ENCODE measurements at regions of chr17 and their contacts with region 1.

Region 1: GRCh38 chr17:28335201-28335955 is at the starts of genes IFT20 and TNFAIP1:
- DNase-seq: peak; percentile 100
- H3K4me3 ChIP-seq: peak within 1 kb of the TSS; percentile 86
- H3K4me3 Mint-ChIP-seq: peak within 1 kb of the TSS; percentile 97
- H3K27ac Mint-ChIP-seq: peak within 1 kb of the TSS; percentile 98
- H3K4me1 ChIP-seq: peaks cover 27% of the 10 kb centered on the region
- H3K4me1 Mint-ChIP-seq: peaks cover 33% of the 10 kb centered on the region
- H3K27me3 ChIP-seq: no peaks in the 10 kb centered on the region
- H3K27me3 Mint-ChIP-seq: no peaks in the 10 kb centered on the region
- CTCF ChIP-seq: no peak
- total RNA-seq, gene IFT20: 86.3 and 89.9 TPM in 2 replicates
- total RNA-seq, gene TNFAIP1: 105 and 119 TPM in 2 replicates

Region 2: GRCh38 chr17:28252436-28252835 is 82.9 kb before region 1 on chr17:
- CTCF ChIA-PET with region 1: interaction called, 17 read pairs
- POLR2A ChIA-PET with region 1: interaction called, 4 read pairs
- intact Hi-C with region 1: no loop called
- DNase-seq: no peak
- H3K4me3 ChIP-seq: no peak overlapping the region
- H3K4me3 Mint-ChIP-seq: no peak overlapping the region
- H3K27ac Mint-ChIP-seq: no peak overlapping the region
- H3K4me1 ChIP-seq: no peaks in the 10 kb centered on the region
- H3K4me1 Mint-ChIP-seq: peaks cover 7% of the 10 kb centered on the region
- H3K27me3 ChIP-seq: no peaks in the 10 kb centered on the region
- H3K27me3 Mint-ChIP-seq: peaks cover 3% of the 10 kb centered on the region
- CTCF ChIP-seq: no peak

Region 3: DNA sequence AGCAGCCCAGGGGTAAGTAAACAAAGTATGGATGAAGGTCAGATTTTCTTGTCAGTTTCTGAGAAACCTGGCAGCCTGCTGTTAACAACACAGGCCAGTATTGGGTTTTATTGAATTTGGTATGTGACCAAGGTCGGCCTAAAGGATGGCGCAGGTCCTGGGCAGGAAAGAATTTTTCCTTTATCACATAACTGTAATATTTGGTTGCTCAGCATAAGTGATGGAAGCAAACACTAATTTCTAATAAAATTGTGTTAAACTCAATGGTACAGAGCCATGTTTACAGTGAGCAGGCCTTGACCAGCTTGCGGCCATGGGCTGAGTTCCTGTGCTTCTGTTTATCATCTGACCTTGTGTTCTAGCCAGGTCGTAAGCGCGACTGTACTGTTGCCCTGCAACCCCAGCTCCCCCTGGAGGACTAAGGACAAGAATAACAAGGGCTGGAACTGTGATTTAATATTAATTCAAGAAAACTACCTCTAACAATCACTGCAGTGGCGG is 11.4 kb after region 1 on chr17:
- CTCF ChIA-PET with region 1: interaction called, 13 read pairs
- POLR2A ChIA-PET with region 1: interaction called, 42 read pairs
- intact Hi-C with region 1: no loop called
- DNase-seq: peak; percentile 70 to 72
- H3K4me3 ChIP-seq: no peak overlapping the region
- H3K4me3 Mint-ChIP-seq: no peak overlapping the region
- H3K27ac Mint-ChIP-seq: peak overlapping the region; percentile 1
- H3K4me1 ChIP-seq: peaks cover 22% of the 10 kb centered on the region
- H3K4me1 Mint-ChIP-seq: peaks cover 8% of the 10 kb centered on the region
- H3K27me3 ChIP-seq: no peaks in the 10 kb centered on the region
- H3K27me3 Mint-ChIP-seq: no peaks in the 10 kb centered on the region
- CTCF ChIP-seq: peak; percentile 48 to 66

Region 4: GRCh38 chr17:28364665-28365363 is 29.4 kb after region 1 on chr17 and contains the start of gene SEBOX:
- CTCF ChIA-PET with region 1: interaction called, 38 read pairs
- POLR2A ChIA-PET with region 1: interaction called, 87 read pairs
- intact Hi-C with region 1: loop called (anchors 1 kb)
- DNase-seq: no peak
- H3K4me3 ChIP-seq: no peak within 1 kb of the TSS
- H3K4me3 Mint-ChIP-seq: no peak within 1 kb of the TSS
- H3K27ac Mint-ChIP-seq: no peak within 1 kb of the TSS
- H3K4me1 ChIP-seq: peaks cover 31% of the 10 kb centered on the region
- H3K4me1 Mint-ChIP-seq: peaks cover 27% of the 10 kb centered on the region
- H3K27me3 ChIP-seq: no peaks in the 10 kb centered on the region
- H3K27me3 Mint-ChIP-seq: no peaks in the 10 kb centered on the region
- CTCF ChIP-seq: no peak
- total RNA-seq, gene SEBOX: not detected in 2 replicates

Region 5: GRCh38 chr17:28384281-28385036 is 49.1 kb after region 1 on chr17:
- CTCF ChIA-PET with region 1: interaction called, 11 read pairs
- POLR2A ChIA-PET with region 1: interaction called, 13 read pairs
- intact Hi-C with region 1: no loop called
- DNase-seq: peak; percentile 83 to 86
- H3K4me3 ChIP-seq: peak overlapping the region; percentile 52
- H3K4me3 Mint-ChIP-seq: peak overlapping the region; percentile 89
- H3K27ac Mint-ChIP-seq: peak overlapping the region; percentile 18
- H3K4me1 ChIP-seq: peaks cover 31% of the 10 kb centered on the region
- H3K4me1 Mint-ChIP-seq: peaks cover 17% of the 10 kb centered on the region
- H3K27me3 ChIP-seq: no peaks in the 10 kb centered on the region
- H3K27me3 Mint-ChIP-seq: no peaks in the 10 kb centered on the region
- CTCF ChIP-seq: no peak

Region 6: GRCh38 chr17:28416703-28417311 is 81.4 kb after region 1 on chr17:
- CTCF ChIA-PET with region 1: interaction called, 16 read pairs
- POLR2A ChIA-PET with region 1: no interaction called
- intact Hi-C with region 1: no loop called
- DNase-seq: peak; percentile 87 to 89
- H3K4me3 ChIP-seq: no peak overlapping the region
- H3K4me3 Mint-ChIP-seq: no peak overlapping the region
- H3K27ac Mint-ChIP-seq: peak overlapping the region; percentile 48
- H3K4me1 ChIP-seq: peaks cover 17% of the 10 kb centered on the region
- H3K4me1 Mint-ChIP-seq: peaks cover 17% of the 10 kb centered on the region
- H3K27me3 ChIP-seq: no peaks in the 10 kb centered on the region
- H3K27me3 Mint-ChIP-seq: no peaks in the 10 kb centered on the region
- CTCF ChIP-seq: peak; percentile 92 to 99

Region 7: GRCh38 chr17:28500712-28501379 is 165.5 kb after region 1 on chr17:
- CTCF ChIA-PET with region 1: no interaction called
- POLR2A ChIA-PET with region 1: no interaction called
- intact Hi-C with region 1: no loop called
- DNase-seq: no peak
- H3K4me3 ChIP-seq: no peak overlapping the region
- H3K4me3 Mint-ChIP-seq: no peak overlapping the region
- H3K27ac Mint-ChIP-seq: no peak overlapping the region
- H3K4me1 ChIP-seq: peaks cover 6% of the 10 kb centered on the region; the same call in 1 of the 2 replicates
- H3K4me1 Mint-ChIP-seq: peaks cover 7% of the 10 kb centered on the region
- H3K27me3 ChIP-seq: no peaks in the 10 kb centered on the region
- H3K27me3 Mint-ChIP-seq: no peaks in the 10 kb centered on the region
- CTCF ChIP-seq: no peak

Region 8: GRCh38 chr17:28571255-28572122 is 236.1 kb after region 1 on chr17 and contains the start of gene PIGS:
- CTCF ChIA-PET with region 1: interaction called, 3 read pairs
- POLR2A ChIA-PET with region 1: interaction called, 6 read pairs
- intact Hi-C with region 1: loop called (anchors 10 kb)
- DNase-seq: peak; percentile 97
- H3K4me3 ChIP-seq: peak within 1 kb of the TSS; percentile 62
- H3K4me3 Mint-ChIP-seq: peak within 1 kb of the TSS; percentile 89
- H3K27ac Mint-ChIP-seq: peak within 1 kb of the TSS; percentile 85
- H3K4me1 ChIP-seq: peaks cover 24% of the 10 kb centered on the region
- H3K4me1 Mint-ChIP-seq: peaks cover 19% of the 10 kb centered on the region
- H3K27me3 ChIP-seq: no peaks in the 10 kb centered on the region
- H3K27me3 Mint-ChIP-seq: no peaks in the 10 kb centered on the region
- CTCF ChIP-seq: no peak
- total RNA-seq, gene PIGS: 78.2 and 99.6 TPM in 2 replicates